CD8-positive, alpha-beta T cell (primary cell): ENCODE measurements at regions of chr1 and their contacts with region 1.

Region 1: DNA sequence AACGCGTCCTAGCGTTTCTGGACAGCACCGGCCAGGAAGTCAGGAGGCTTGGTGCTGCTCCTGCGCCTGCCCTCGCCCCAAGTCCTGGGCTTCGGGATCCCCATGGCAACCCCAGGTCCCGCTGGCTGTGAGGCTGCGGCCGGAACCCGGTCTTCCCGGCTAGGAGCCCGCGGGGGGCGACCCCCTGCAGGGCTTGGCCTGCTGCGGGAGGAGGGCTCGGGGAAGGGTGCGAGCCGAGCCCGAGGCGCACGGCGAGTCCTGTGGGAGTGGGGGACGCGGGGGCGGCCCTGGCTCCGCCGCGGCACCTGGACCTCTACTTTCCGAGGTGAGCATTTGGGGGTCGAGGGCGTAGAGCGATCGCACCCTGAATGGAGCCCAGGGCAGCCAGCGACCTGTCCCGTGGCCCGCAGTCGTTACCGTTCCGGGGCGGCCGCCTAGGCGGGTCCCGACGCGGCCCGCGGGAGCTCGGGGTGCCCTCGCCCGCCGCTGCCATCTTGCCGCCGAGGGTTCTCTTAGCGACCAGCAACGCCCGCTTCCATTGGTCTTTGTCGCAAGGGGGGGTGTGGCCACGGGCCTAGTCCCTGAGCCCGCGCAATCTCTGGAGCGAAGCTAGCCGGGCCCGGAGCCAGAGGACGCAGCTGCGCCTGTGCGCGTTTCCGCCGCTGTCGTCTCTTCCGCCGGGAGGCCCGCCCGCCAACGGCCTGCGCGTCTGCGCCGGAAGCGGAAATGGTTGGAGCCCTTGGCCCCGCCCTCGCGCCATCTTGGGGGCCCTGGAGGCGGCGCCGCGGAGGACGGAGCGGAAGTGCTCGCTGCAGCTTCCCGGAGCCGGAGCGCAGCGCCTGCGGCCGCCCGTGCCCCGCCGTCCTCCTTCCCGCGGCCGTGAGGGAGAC is at the starts of genes MORN1 and RER1:
- DNase-seq: peak; percentile 97 to 100 (median 99)
- ATAC-seq: peak; percentile 95
- H3K4me3 ChIP-seq: peak within 1 kb of the TSS; percentile 57 to 90
- H3K4me3 Mint-ChIP-seq: peak within 1 kb of the TSS; percentile 91
- H3K27ac ChIP-seq: peak within 1 kb of the TSS; percentile 67 to 70
- H3K27ac Mint-ChIP-seq: peak within 1 kb of the TSS; percentile 94
- H3K4me1 ChIP-seq: peaks cover 37% of the 10 kb centered on the region
- H3K4me1 Mint-ChIP-seq: peaks cover 30% of the 10 kb centered on the region
- H3K27me3 ChIP-seq: no peaks in the 10 kb centered on the region
- H3K27me3 Mint-ChIP-seq: no peaks in the 10 kb centered on the region
- CTCF ChIP-seq: no peak
- total RNA-seq, gene MORN1: 4.9 to 5.0 TPM
- total RNA-seq, gene RER1: 54.6 to 58.7 TPM

Region 2: GRCh38 chr1:1777950-1778662 is 613.2 kb before region 1 on chr1 and contains the start of gene NADK:
- CTCF ChIA-PET with region 1: no interaction called
- POLR2A ChIA-PET with region 1: no interaction called
- intact Hi-C with region 1: loop called in 1 of 2 experiments (anchors 10 kb)
- DNase-seq: peak; percentile 45 to 88 (median 70)
- ATAC-seq: peak; percentile 54
- H3K4me3 ChIP-seq: peak within 1 kb of the TSS; percentile 60 to 64
- H3K4me3 Mint-ChIP-seq: peak within 1 kb of the TSS; percentile 84
- H3K27ac ChIP-seq: peak within 1 kb of the TSS; percentile 56 to 95
- H3K27ac Mint-ChIP-seq: peak within 1 kb of the TSS; percentile 93
- H3K4me1 ChIP-seq: peaks cover 66% of the 10 kb centered on the region
- H3K4me1 Mint-ChIP-seq: peaks cover 63% of the 10 kb centered on the region
- H3K27me3 ChIP-seq: no peaks in the 10 kb centered on the region
- H3K27me3 Mint-ChIP-seq: no peaks in the 10 kb centered on the region
- CTCF ChIP-seq: no peak
- total RNA-seq, gene NADK: 15.4 to 16.7 TPM

Region 3: GRCh38 chr1:2049718-2050427 is 341.4 kb before region 1 on chr1 and contains the start of gene PRKCZ:
- CTCF ChIA-PET with region 1: no interaction called
- POLR2A ChIA-PET with region 1: no interaction called
- intact Hi-C with region 1: loop called in 1 of 2 experiments (anchors 1 kb)
- DNase-seq: peak; percentile 90 to 98 (median 95)
- ATAC-seq: peak; percentile 97
- H3K4me3 ChIP-seq: peak within 1 kb of the TSS; percentile 76 to 88
- H3K4me3 Mint-ChIP-seq: peak within 1 kb of the TSS; percentile 80
- H3K27ac ChIP-seq: peak within 1 kb of the TSS; percentile 33 to 64
- H3K27ac Mint-ChIP-seq: no peak within 1 kb of the TSS
- H3K4me1 ChIP-seq: peaks cover 30% of the 10 kb centered on the region
- H3K4me1 Mint-ChIP-seq: peaks cover 28% of the 10 kb centered on the region
- H3K27me3 ChIP-seq: peaks cover 0 to 5% of the 10 kb centered on the region in 2 experiments
- H3K27me3 Mint-ChIP-seq: no peaks in the 10 kb centered on the region
- CTCF ChIP-seq: no peak
- total RNA-seq, gene PRKCZ: 17.1 to 19.6 TPM

Region 4: DNA sequence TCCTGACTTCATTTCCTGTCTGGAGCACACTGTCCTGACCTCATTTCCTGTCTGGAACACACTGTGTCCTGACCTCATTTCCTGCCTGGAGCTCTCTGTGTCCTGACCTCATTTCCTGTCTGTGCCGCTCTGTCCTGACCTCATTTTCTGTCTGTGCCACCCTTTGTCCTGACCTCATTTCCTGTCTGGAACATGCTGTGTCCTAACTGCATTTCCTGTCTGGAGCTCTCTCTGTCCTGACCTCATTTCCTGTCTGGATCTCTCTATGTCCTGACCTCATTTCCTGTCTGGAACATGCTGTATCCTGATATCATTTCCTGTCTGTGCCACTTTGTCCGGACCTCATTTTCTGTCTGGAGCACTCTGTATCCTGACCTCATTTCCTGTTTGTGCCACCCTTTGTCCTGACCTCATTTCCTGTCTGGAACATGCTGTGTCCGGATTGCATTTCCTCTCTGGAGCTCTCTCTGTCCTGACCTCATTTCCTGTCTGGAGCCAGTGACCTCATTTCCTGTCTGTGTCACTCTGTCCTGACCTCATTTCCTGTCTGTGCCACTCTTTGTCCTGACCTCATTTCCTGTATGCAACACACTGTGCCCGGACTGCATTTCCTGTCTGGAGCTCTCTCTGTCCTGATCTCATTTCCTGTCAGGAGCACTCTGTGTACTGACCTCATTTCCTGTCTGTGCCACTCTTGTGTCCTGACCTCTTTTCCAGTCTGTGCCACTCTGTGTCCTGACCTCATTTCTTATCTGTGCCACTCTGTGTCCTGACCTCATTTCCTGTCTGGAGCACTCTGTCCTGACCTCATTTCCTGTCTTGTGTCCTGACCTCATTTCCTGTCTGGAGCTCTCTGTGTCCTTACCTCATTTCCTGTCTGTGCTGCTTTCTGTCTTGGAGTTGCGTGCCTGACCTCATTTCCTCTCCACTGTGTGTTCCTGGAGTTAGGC is 135.6 kb before region 1 on chr1:
- CTCF ChIA-PET with region 1: no interaction called
- POLR2A ChIA-PET with region 1: interaction called, 5 read pairs
- intact Hi-C with region 1: loop called (anchors 1 kb)
- DNase-seq: peak; percentile 59 to 97 (median 75)
- ATAC-seq: peak; percentile 66
- H3K4me3 ChIP-seq: no peak overlapping the region
- H3K4me3 Mint-ChIP-seq: no peak overlapping the region
- H3K27ac ChIP-seq: peak overlapping the region; percentile 97 to 100
- H3K27ac Mint-ChIP-seq: no peak overlapping the region
- H3K4me1 ChIP-seq: peaks cover 86% of the 10 kb centered on the region
- H3K4me1 Mint-ChIP-seq: peaks cover 54% of the 10 kb centered on the region
- H3K27me3 ChIP-seq: no peaks in the 10 kb centered on the region
- H3K27me3 Mint-ChIP-seq: no peaks in the 10 kb centered on the region
- CTCF ChIP-seq: no peak

Region 5: DNA sequence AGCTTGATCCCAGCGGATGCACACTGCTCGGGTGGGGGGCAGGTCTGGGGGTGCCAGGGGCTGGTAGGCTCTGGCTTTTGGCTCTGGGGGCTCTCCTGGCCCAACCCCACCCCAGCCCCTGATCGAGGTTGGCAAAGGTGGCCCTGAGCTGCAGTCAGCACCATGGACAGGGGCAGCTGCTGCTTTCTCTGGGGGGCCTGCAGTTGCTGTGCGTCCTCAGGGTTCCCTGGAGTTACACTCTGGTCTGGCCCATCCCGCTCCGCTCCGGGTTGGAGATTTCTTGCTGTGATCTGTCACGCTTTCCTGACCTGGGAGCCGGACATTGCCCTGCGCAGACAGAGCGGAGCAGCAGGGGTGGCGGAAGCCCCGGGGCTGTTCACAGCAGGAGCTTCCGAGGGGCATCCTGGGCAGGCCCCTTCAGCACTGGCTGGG is 76.8 kb after region 1 on chr1:
- CTCF ChIA-PET with region 1: no interaction called
- POLR2A ChIA-PET with region 1: no interaction called
- intact Hi-C with region 1: no loop called
- DNase-seq: peak; percentile 15 to 66 (median 60)
- ATAC-seq: peak; percentile 71
- H3K4me3 ChIP-seq: no peak overlapping the region
- H3K4me3 Mint-ChIP-seq: no peak overlapping the region
- H3K27ac ChIP-seq: no peak overlapping the region
- H3K27ac Mint-ChIP-seq: no peak overlapping the region
- H3K4me1 ChIP-seq: peaks cover 5% of the 10 kb centered on the region
- H3K4me1 Mint-ChIP-seq: peaks cover 2% of the 10 kb centered on the region
- H3K27me3 ChIP-seq: peaks cover 0 to 2% of the 10 kb centered on the region in 2 experiments
- H3K27me3 Mint-ChIP-seq: peaks cover 10% of the 10 kb centered on the region
- CTCF ChIP-seq: no peak

Region 6: DNA sequence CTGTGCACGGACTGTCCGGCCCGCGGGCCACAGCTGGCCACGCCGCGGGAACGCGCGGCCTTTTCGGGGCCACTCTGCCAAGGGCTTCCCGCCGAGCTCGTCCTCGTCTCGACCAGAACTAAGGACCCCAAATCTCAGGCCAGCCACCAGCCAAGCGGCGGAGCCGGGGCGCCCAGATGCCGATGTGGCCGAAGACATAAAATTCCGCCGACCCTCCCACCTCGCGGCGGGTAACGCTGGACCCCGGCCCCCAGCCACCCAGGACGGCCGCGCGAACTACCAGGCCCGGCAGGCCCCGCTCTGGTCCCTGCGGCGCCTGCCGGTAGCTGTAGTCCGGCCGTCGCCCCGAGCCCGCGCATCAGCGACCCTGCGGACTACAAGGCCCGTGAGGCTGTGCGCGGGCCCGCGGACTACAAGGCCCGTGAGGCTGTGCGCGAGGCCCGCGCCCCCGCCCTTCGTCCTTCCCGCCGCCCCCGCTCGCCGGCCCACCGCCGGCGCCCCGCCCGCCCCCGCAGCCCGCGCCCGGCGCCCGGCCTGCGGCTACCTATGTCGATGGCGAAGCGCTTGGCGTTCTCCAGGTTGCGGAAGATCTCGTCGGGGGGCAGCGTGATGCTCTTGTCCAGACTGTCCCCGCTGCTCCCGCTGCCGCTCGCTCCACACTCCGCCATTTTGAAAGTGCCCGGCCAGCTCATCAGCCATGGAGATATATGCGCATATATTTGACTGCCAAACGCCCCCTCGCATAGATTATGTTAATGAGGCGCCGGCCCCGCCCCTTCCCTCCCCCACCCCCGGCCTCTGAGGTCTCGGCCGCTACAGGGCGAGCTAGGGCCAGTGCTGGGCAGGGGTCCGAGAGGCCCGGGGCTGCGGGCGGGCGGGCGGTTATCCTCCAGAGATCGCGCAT is 134.9 kb after region 1 on chr1 and contains the start of gene PANK4:
- CTCF ChIA-PET with region 1: interaction called, 5 read pairs
- POLR2A ChIA-PET with region 1: interaction called, 9 read pairs
- intact Hi-C with region 1: loop called (anchors 1 kb)
- DNase-seq: peak; percentile 77 to 96 (median 87)
- ATAC-seq: peak; percentile 85
- H3K4me3 ChIP-seq: peak within 1 kb of the TSS; percentile 85 to 98
- H3K4me3 Mint-ChIP-seq: peak within 1 kb of the TSS; percentile 98
- H3K27ac ChIP-seq: peak within 1 kb of the TSS; percentile 50 to 76
- H3K27ac Mint-ChIP-seq: peak within 1 kb of the TSS; percentile 97
- H3K4me1 ChIP-seq: peaks cover 66% of the 10 kb centered on the region
- H3K4me1 Mint-ChIP-seq: peaks cover 49% of the 10 kb centered on the region
- H3K27me3 ChIP-seq: peaks cover 7 to 14% of the 10 kb centered on the region in 2 experiments
- H3K27me3 Mint-ChIP-seq: peaks cover 2% of the 10 kb centered on the region
- CTCF ChIP-seq: no peak
- total RNA-seq, gene PANK4: 44.1 to 44.8 TPM

Region 7: GRCh38 chr1:2642560-2643413 is 251.5 kb after region 1 on chr1:
- CTCF ChIA-PET with region 1: no interaction called
- POLR2A ChIA-PET with region 1: no interaction called
- intact Hi-C with region 1: loop called in 1 of 2 experiments (anchors 1 kb)
- DNase-seq: peak; percentile 88 to 97 (median 96)
- ATAC-seq: peak; percentile 84
- H3K4me3 ChIP-seq: peak overlapping the region; percentile 63 to 95
- H3K4me3 Mint-ChIP-seq: peak overlapping the region; percentile 85
- H3K27ac ChIP-seq: peak overlapping the region; percentile 91 to 93
- H3K27ac Mint-ChIP-seq: peak overlapping the region; percentile 88
- H3K4me1 ChIP-seq: peaks cover 17% of the 10 kb centered on the region
- H3K4me1 Mint-ChIP-seq: peaks cover 13% of the 10 kb centered on the region
- H3K27me3 ChIP-seq: no peaks in the 10 kb centered on the region
- H3K27me3 Mint-ChIP-seq: no peaks in the 10 kb centered on the region
- CTCF ChIP-seq: no peak